A549 (cell line): ENCODE measurements at regions of chr9 and their contacts with region 1.

Region 1: GRCh38 chr9:137534256-137535117 is 15.7 kb downstream of the PNPLA7 start:
- DNase-seq: peak; percentile 73 to 74
- ATAC-seq: peak; percentile 82 to 92
- H3K4me3 ChIP-seq: no peak overlapping the region
- H3K27ac ChIP-seq: peak overlapping the region; percentile 3 to 38; a peak in 4 of 6 replicates
- H3K4me1 ChIP-seq: peaks cover 4% of the 10 kb centered on the region
- CTCF ChIP-seq: peak; percentile 72
- EP300 ChIP-seq: no peak
- POLR2A ChIP-seq: no peak
- RAD21 ChIP-seq: peak; percentile 23 to 34; a peak in 2 of 5 replicates

Region 2: DNA sequence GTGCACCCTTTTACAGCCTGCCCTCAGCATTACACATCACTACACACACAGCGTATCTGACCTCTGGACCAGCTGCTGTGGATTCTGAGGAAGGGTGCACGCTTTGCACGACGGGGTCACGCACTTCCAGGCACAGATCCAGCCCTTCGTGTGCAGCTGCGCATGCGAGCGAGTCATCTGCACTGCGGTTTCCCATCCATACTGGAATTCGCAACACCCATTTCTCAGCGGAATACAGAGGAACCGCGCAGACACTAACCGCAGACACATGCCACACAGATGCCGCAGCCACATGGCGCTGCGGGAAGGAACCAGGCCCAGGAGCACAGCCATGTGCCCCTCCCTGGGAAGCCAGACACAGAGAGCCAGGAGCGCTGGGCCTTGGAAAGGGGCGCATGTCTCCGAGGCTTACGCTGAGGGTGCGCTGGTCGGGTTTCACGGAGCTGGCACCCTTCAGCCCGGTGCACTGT is 27.8 kb before region 1 on chr9:
- CTCF ChIA-PET with region 1: interaction called, 15 read pairs
- POLR2A ChIA-PET with region 1: no interaction called
- DNase-seq: no peak
- ATAC-seq: peak in 1 of 2 experiments; percentile 48; a peak in 2 of 6 replicates
- H3K4me3 ChIP-seq: no peak overlapping the region
- H3K27ac ChIP-seq: no peak overlapping the region
- H3K4me1 ChIP-seq: peaks cover 13% of the 10 kb centered on the region; the same call in 2 of the 3 replicates
- CTCF ChIP-seq: no peak
- EP300 ChIP-seq: no peak
- POLR2A ChIP-seq: no peak
- RAD21 ChIP-seq: no peak

Region 3: DNA sequence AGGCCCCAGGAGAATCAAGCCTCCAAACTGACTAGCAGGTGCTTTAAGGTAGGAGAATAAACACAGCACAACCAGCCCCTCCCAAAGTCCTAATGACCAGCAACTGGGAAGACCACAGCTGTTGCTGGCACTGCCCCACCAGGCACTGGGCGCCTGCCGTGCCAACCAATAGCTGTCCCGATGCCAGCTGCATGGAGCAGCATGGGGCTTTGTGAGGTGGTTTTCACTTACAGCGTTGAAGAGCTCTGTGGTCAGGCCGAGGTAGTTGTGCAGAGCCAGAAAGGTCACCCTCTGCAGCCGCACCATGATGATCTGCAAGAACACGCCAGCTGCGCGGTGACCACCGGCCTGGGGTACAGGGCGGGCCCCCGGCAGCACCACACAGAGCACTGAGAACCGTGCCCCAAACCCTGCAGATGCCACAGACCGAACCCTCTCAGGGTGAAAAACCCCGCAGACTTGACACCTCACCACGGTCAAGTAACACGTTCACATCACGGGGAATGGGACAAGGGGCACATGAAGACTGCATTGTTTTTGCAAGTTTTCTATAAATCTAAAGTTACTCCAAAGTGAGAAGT is 13.0 kb before region 1 on chr9:
- CTCF ChIA-PET with region 1: interaction called, 15 read pairs
- POLR2A ChIA-PET with region 1: no interaction called
- DNase-seq: no peak
- ATAC-seq: no peak
- H3K4me3 ChIP-seq: no peak overlapping the region
- H3K27ac ChIP-seq: no peak overlapping the region
- H3K4me1 ChIP-seq: no peaks in the 10 kb centered on the region
- CTCF ChIP-seq: no peak
- EP300 ChIP-seq: no peak
- POLR2A ChIP-seq: no peak
- RAD21 ChIP-seq: no peak

Region 4: GRCh38 chr9:137545123-137545522 is 10.6 kb after region 1 on chr9:
- CTCF ChIA-PET with region 1: interaction called, 16 read pairs
- POLR2A ChIA-PET with region 1: interaction called, 5 read pairs
- DNase-seq: no peak
- ATAC-seq: no peak
- H3K4me3 ChIP-seq: no peak overlapping the region
- H3K27ac ChIP-seq: no peak overlapping the region
- H3K4me1 ChIP-seq: peaks cover 5% of the 10 kb centered on the region
- CTCF ChIP-seq: no peak
- EP300 ChIP-seq: no peak
- POLR2A ChIP-seq: no peak
- RAD21 ChIP-seq: no peak

Region 5: DNA sequence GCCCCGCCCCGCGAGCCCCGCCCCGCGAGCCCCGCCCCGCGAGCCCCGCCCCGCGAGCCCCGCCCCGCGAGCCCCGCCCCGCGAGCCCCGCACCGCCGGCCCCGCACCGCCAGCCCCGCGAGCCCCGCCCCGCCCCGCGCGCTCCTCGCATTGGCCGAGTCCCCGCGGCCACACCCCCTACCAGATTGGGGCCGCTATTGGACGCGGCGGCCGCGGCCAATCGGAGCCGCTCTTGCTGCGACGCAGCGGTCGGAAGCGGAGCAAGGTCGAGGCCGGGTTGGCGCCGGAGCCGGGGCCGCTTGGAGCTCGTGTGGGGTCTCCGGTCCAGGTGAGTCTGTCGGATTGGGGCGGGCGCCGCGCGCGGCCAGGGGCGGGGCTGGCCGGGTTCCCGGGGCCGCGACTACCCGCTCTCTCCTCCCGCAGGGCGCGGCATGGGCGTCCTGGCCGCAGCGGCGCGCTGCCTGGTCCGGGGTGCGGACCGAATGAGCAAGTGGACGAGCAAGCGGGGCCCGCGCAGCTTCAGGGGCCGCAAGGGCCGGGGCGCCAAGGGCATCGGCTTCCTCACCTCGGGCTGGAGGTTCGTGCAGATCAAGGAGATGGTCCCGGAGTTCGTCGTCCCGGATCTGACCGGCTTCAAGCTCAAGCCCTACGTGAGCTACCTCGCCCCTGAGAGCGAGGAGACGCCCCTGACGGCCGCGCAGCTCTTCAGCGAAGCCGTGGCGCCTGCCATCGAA is 17.3 kb after region 1 on chr9 and contains the start of gene MRPL41:
- CTCF ChIA-PET with region 1: interaction called, 11 read pairs
- POLR2A ChIA-PET with region 1: interaction called, 6 read pairs
- DNase-seq: peak; percentile 87 to 92
- ATAC-seq: peak; percentile 81 to 86
- H3K4me3 ChIP-seq: peak within 1 kb of the TSS; percentile 77
- H3K27ac ChIP-seq: peak within 1 kb of the TSS; percentile 93 to 96
- H3K4me1 ChIP-seq: peaks cover 15% of the 10 kb centered on the region
- CTCF ChIP-seq: no peak
- EP300 ChIP-seq: no peak
- POLR2A ChIP-seq: peak; percentile 78
- RAD21 ChIP-seq: no peak
- polyA plus RNA-seq, gene MRPL41: 19.2 and 19.7 TPM in 2 replicates

Region 6: DNA sequence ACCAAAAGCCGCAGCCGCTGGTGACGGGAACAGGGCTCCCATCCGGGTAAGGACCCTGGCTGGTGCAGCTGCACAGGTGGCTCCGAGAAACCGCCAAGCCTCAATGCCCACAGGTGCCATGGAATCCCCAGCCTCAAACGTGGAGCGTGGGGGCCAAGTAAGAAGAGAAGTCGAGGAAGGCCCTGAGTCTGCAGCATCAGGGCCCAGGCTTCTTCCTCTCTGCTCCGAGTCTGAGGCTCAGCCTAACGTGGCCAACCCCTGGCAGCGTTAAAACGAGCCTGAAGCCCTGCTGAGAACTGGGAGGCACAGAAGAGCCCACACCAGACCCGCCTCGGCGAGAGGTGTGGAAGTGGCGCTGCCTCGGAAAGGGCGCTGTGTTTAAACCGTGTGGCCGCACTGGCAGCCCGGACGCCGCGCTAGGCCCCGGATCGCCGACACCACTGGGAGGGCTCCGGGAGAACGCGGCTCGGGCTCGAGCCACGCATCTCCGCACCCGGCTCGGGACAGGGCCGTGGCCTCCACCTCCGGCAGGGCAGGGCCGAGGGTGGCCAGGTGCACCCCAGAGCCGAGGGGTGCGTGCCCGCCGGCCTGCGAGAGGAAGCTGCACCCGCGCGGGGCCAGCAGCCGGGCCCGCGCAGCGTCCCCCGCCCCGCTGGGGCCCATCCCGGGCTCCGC is 55.1 kb after region 1 on chr9:
- CTCF ChIA-PET with region 1: no interaction called
- POLR2A ChIA-PET with region 1: no interaction called
- DNase-seq: no peak
- ATAC-seq: peak in 1 of 2 experiments; percentile 30; a peak in 4 of 6 replicates
- H3K4me3 ChIP-seq: peak overlapping the region; percentile 99
- H3K27ac ChIP-seq: peak overlapping the region; percentile 94 to 95
- H3K4me1 ChIP-seq: peaks cover 15% of the 10 kb centered on the region; the same call in 1 of the 3 replicates
- CTCF ChIP-seq: no peak
- EP300 ChIP-seq: no peak
- POLR2A ChIP-seq: no peak
- RAD21 ChIP-seq: no peak

Region 7: DNA sequence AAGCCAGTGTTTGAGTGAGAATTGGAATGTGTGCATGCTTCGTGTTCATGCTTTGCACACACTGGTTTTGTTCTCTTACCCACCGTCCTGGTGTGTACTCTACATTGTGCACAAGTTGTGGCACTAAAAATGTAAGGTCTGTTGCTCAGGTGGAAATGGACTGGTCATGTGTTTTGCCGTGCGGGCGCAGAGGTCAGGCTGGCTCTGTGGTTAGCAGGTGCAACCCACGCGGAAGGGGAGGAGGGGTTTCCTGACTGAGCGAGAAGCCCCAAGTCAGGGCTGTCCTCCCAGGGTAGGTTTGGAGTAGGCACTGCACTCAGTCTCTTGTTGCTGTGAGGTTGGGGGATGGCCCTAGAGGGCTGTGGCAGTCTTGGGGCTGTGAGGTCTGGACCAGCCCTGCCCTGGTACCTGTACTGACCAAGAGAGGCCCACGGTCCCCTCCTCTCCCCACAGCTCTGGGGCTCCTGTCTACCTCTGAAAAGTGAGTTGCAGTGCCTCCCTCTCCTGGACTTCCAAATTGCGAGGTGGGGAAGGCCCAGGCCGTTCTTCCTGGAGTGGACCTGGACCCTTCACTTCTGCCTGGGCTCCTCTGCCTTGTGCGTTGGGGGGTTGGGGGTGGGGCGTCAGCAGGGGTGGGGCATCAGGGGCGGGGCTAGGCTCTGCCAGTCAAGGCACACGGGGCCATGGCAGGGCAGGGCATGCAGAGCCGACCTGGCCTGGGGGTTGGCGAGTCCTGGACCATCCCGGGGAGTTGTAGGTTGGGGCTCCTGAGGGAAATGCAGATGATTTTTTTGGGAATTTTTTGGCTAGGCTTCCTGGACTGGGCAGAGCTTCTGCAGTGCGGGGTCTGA is 171.2 kb after region 1 on chr9:
- CTCF ChIA-PET with region 1: no interaction called
- POLR2A ChIA-PET with region 1: no interaction called
- DNase-seq: no peak
- ATAC-seq: peak; percentile 34 to 46; a peak in 3 of 6 replicates
- H3K4me3 ChIP-seq: no peak overlapping the region
- H3K27ac ChIP-seq: peak overlapping the region in 1 of 2 experiments; percentile 39; a peak in 1 of 6 replicates
- H3K4me1 ChIP-seq: no peaks in the 10 kb centered on the region
- CTCF ChIP-seq: no peak
- EP300 ChIP-seq: no peak
- POLR2A ChIP-seq: no peak
- RAD21 ChIP-seq: no peak